B cell (primary cell): ENCODE measurements at regions of chr12 and their contacts with region 1.

Region 1: GRCh38 chr12:45990468-45991283 is at the start of gene SCAF11:
- DNase-seq: peak; percentile 100
- ATAC-seq: peak; percentile 86
- H3K4me3 ChIP-seq: peak within 1 kb of the TSS; percentile 83 to 100 (median 95)
- H3K4me3 Mint-ChIP-seq: peak within 1 kb of the TSS; percentile 97
- H3K27ac ChIP-seq: peak within 1 kb of the TSS; percentile 93 to 98
- H3K27ac Mint-ChIP-seq: peak within 1 kb of the TSS; percentile 99
- H3K4me1 ChIP-seq: peaks cover 37 to 38% of the 10 kb centered on the region in 2 donors
- H3K4me1 Mint-ChIP-seq: peaks cover 44% of the 10 kb centered on the region
- H3K27me3 ChIP-seq: no peaks in the 10 kb centered on the region
- H3K27me3 Mint-ChIP-seq: no peaks in the 10 kb centered on the region
- CTCF ChIP-seq: peak; percentile 83
- total RNA-seq, gene SCAF11: 247 and 272 TPM in 2 replicates

Region 2: GRCh38 chr12:45575823-45576475 is 414.7 kb before region 1 on chr12:
- CTCF ChIA-PET with region 1: no interaction called
- POLR2A ChIA-PET with region 1: no interaction called
- intact Hi-C with region 1: loop called (anchors 5 kb)
- DNase-seq: peak; percentile 77
- ATAC-seq: peak; percentile 71
- H3K4me3 ChIP-seq: peak overlapping the region in 1 of 5 experiments; percentile 10
- H3K4me3 Mint-ChIP-seq: peak overlapping the region; percentile 44
- H3K27ac ChIP-seq: peak overlapping the region; percentile 5 to 63
- H3K27ac Mint-ChIP-seq: peak overlapping the region; percentile 85
- H3K4me1 ChIP-seq: peaks cover 32 to 33% of the 10 kb centered on the region in 2 donors
- H3K4me1 Mint-ChIP-seq: peaks cover 39% of the 10 kb centered on the region
- H3K27me3 ChIP-seq: no peaks in the 10 kb centered on the region
- H3K27me3 Mint-ChIP-seq: peaks cover 4% of the 10 kb centered on the region
- CTCF ChIP-seq: no peak

Region 3: DNA sequence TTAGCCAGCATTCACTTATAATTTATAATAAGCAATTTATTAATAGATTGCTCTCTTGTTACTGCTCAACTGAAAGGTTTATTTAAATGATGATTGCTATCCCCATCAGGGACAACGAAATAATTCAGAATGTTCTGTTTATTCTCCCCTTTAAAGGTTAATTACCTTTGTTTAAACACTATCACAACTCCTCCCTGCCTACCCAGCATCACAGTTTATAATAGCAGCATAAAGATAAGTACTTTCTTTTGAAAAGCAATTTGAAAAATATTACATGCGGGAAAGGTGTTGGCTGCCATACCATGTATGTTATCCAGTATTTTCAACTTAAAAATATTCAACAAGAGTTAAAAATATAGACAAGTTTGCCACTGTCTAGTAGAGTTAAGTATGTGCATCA is 30.9 kb before region 1 on chr12:
- CTCF ChIA-PET with region 1: no interaction called
- POLR2A ChIA-PET with region 1: no interaction called
- intact Hi-C with region 1: loop called (anchors 5 kb)
- DNase-seq: no peak
- ATAC-seq: no peak
- H3K4me3 ChIP-seq: no peak overlapping the region
- H3K4me3 Mint-ChIP-seq: no peak overlapping the region
- H3K27ac ChIP-seq: no peak overlapping the region
- H3K27ac Mint-ChIP-seq: no peak overlapping the region
- H3K4me1 ChIP-seq: no peaks in the 10 kb centered on the region
- H3K4me1 Mint-ChIP-seq: peaks cover 10% of the 10 kb centered on the region
- H3K27me3 ChIP-seq: no peaks in the 10 kb centered on the region
- H3K27me3 Mint-ChIP-seq: no peaks in the 10 kb centered on the region
- CTCF ChIP-seq: no peak

Region 4: GRCh38 chr12:46108721-46109120 is 118.0 kb after region 1 on chr12:
- CTCF ChIA-PET with region 1: interaction called, 12 read pairs
- POLR2A ChIA-PET with region 1: no interaction called
- intact Hi-C with region 1: loop called (anchors 1 kb)
- DNase-seq: peak; percentile 80
- ATAC-seq: peak; percentile 83
- H3K4me3 ChIP-seq: peak overlapping the region in 1 of 5 experiments; percentile 8
- H3K4me3 Mint-ChIP-seq: peak overlapping the region; percentile 49
- H3K27ac ChIP-seq: peak overlapping the region; percentile 53 to 75
- H3K27ac Mint-ChIP-seq: peak overlapping the region; percentile 85
- H3K4me1 ChIP-seq: peaks cover 45 to 48% of the 10 kb centered on the region in 2 donors
- H3K4me1 Mint-ChIP-seq: peaks cover 45% of the 10 kb centered on the region
- H3K27me3 ChIP-seq: no peaks in the 10 kb centered on the region
- H3K27me3 Mint-ChIP-seq: no peaks in the 10 kb centered on the region
- CTCF ChIP-seq: no peak

Region 5: GRCh38 chr12:46268590-46269558 is 278.2 kb after region 1 on chr12 and contains the start of gene SLC38A1:
- CTCF ChIA-PET with region 1: interaction called, 4 read pairs
- POLR2A ChIA-PET with region 1: interaction called, 13 read pairs
- intact Hi-C with region 1: loop called (anchors 2 kb)
- DNase-seq: peak; percentile 93
- ATAC-seq: peak; percentile 69
- H3K4me3 ChIP-seq: peak within 1 kb of the TSS; percentile 70 to 98 (median 96)
- H3K4me3 Mint-ChIP-seq: no peak within 1 kb of the TSS
- H3K27ac ChIP-seq: peak within 1 kb of the TSS; percentile 91 to 94
- H3K27ac Mint-ChIP-seq: no peak within 1 kb of the TSS
- H3K4me1 ChIP-seq: peaks cover 38 to 41% of the 10 kb centered on the region in 2 donors
- H3K4me1 Mint-ChIP-seq: peaks cover 30% of the 10 kb centered on the region
- H3K27me3 ChIP-seq: no peaks in the 10 kb centered on the region
- H3K27me3 Mint-ChIP-seq: no peaks in the 10 kb centered on the region
- CTCF ChIP-seq: no peak
- total RNA-seq, gene SLC38A1: 205 and 219 TPM in 2 replicates

Region 6: DNA sequence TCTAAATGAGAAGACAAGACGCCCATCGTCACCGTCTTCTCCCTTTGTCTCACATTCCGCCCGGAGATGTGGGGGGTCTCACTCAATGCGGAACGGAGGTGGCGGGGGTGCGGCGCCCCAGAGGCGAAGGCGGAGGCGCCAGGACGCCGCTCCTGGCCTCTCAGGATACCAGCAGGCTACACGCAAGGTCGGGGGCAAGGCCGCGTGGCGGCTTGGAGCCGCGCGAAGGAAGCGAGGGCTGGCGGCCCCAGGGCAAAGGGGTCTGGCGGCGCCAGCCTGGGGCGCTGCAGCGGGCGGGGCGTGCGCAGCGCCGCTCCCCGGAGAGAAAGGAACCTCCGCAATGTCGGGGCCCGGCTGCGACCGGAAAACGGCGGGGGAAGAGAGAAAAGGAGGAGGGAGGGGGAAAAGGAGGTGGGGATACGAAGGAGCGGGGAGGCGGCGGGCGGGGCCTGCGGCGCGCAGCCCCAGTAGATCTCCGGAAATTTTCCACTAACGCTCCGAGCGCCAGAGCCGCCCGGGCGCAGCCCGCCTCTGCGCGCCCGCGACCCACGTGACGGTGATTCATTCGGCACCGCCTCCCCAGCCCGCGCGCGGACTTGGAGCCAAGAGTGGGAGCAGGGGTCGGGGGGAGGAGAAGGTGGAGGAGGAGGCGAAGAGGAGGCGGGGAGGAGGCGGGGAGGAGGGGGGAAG is 392.4 kb after region 1 on chr12:
- CTCF ChIA-PET with region 1: no interaction called
- POLR2A ChIA-PET with region 1: no interaction called
- intact Hi-C with region 1: loop called (anchors 2 kb)
- DNase-seq: peak; percentile 94
- ATAC-seq: peak; percentile 69
- H3K4me3 ChIP-seq: peak overlapping the region; percentile 49 to 94 (median 84)
- H3K4me3 Mint-ChIP-seq: peak overlapping the region; percentile 90
- H3K27ac ChIP-seq: peak overlapping the region; percentile 94 to 97
- H3K27ac Mint-ChIP-seq: peak overlapping the region; percentile 98
- H3K4me1 ChIP-seq: peaks cover 38 to 44% of the 10 kb centered on the region in 2 donors
- H3K4me1 Mint-ChIP-seq: peaks cover 46% of the 10 kb centered on the region
- H3K27me3 ChIP-seq: no peaks in the 10 kb centered on the region
- H3K27me3 Mint-ChIP-seq: no peaks in the 10 kb centered on the region
- CTCF ChIP-seq: no peak